ENCODE measurements at regions of chr7 and their contacts with region 1.

Region 1: DNA sequence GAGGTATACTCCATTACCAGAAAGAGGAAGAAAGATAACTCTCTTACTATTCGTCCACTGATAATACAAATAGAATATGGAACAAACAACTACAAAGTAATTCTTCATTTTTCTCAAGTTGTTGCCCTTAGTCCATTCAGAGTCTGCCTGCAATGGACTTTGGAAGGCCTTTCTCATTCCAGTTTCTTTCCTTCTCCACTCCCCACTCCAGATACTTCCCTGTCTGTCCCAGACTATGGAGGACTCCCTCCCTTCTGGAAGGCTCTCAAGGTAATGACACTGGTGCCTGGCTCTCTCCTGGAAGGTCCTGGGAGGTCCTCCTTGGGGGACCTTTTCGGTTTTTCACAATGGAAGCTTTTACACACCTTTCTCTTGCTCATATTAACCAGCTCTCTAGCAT is 167.8 kb downstream of the SDHAF3 start:
- DNase-seq: no peak
- H3K4me3 ChIP-seq: no peak overlapping the region
- H3K27ac ChIP-seq: no peak overlapping the region
- H3K4me1 ChIP-seq: no peaks in the 10 kb centered on the region
- H3K27me3 ChIP-seq: no peaks in the 10 kb centered on the region
- CTCF ChIP-seq: no peak
- POLR2A ChIP-seq: no peak

Region 2: GRCh38 chr7:97346349-97346748 is 61.0 kb after region 1 on chr7:
- intact Hi-C with region 1: no loop called
- DNase-seq: no peak
- H3K4me3 ChIP-seq: no peak overlapping the region
- H3K27ac ChIP-seq: no peak overlapping the region
- H3K4me1 ChIP-seq: no peaks in the 10 kb centered on the region
- H3K27me3 ChIP-seq: no peaks in the 10 kb centered on the region
- CTCF ChIP-seq: no peak
- POLR2A ChIP-seq: no peak

Region 3: GRCh38 chr7:97405835-97406234 is 120.5 kb after region 1 on chr7:
- intact Hi-C with region 1: no loop called
- DNase-seq: no peak
- H3K4me3 ChIP-seq: no peak overlapping the region
- H3K27ac ChIP-seq: no peak overlapping the region
- H3K4me1 ChIP-seq: no peaks in the 10 kb centered on the region
- H3K27me3 ChIP-seq: peaks cover 0 to 4% of the 10 kb centered on the region in 2 donors
- CTCF ChIP-seq: no peak
- POLR2A ChIP-seq: no peak

Region 4: DNA sequence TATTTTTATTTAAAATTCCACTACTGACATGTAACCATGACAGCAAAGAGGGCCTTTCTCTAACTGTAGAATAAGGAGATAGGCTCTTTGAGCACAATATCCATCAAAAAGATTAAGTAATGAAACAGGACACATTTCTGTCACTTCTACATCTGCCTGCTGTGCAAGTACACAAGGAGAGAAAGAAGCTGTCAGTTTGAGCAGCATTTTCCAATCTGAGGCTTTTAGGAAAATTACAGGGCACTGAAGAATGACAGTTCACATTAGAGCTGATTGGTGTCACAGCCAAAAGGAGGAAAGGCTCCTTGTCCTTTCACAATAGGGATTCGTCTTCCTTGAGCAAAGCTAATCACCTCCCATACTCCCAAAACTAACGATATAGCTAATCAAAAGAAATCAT is 287.7 kb after region 1 on chr7:
- intact Hi-C with region 1: loop called (anchors 5 kb)
- DNase-seq: no peak
- H3K4me3 ChIP-seq: no peak overlapping the region
- H3K27ac ChIP-seq: no peak overlapping the region
- H3K4me1 ChIP-seq: no peaks in the 10 kb centered on the region
- H3K27me3 ChIP-seq: no peaks in the 10 kb centered on the region
- CTCF ChIP-seq: no peak
- POLR2A ChIP-seq: no peak

Region 5: GRCh38 chr7:98091061-98091460 is 805.7 kb after region 1 on chr7:
- intact Hi-C with region 1: no loop called
- DNase-seq: no peak
- H3K4me3 ChIP-seq: no peak overlapping the region
- H3K27ac ChIP-seq: no peak overlapping the region
- H3K4me1 ChIP-seq: no peaks in the 10 kb centered on the region
- H3K27me3 ChIP-seq: no peaks in the 10 kb centered on the region
- CTCF ChIP-seq: no peak
- POLR2A ChIP-seq: no peak